A673 (cell line): ENCODE measurements at regions of chr10 and their contacts with region 1.

Region 1: DNA sequence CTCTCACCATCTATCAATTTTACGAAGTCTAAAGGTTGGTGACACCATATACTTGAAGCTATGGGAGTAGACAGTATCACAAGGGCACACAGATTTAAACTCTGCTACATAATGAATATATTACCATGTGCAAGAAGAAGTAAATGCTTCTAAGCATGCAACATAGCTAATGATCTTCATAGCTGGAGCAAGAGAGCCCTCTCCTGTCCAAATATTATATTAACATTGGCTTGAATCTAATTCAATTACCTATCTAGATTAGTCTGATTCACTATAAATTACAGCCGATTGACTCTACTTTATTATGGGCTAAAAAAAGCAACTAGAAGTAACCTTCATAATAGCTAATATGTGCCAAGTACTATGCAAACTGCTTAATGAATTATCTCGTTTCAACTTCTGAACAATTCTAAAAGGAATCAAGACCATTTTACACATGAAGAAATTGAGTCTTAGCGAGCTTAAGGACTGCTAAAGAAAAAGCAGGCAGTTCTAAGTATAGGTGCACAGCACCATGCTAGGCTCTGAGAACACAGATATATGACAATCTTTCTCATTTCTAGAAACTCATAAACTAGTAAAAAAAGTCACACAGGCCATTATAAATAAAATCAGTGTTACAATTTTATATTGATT is 21.9 kb downstream of the FRA10AC1 start:
- DNase-seq: peak; percentile 56
- H3K4me3 ChIP-seq: no peak overlapping the region
- H3K27ac ChIP-seq: no peak overlapping the region
- H3K4me1 ChIP-seq: no peaks in the 10 kb centered on the region
- H3K27me3 ChIP-seq: no peaks in the 10 kb centered on the region
- CTCF ChIP-seq: peak; percentile 53

Region 2: GRCh38 chr10:93376372-93377293 is 303.9 kb before region 1 on chr10:
- CTCF ChIA-PET with region 1: interaction called, 7 read pairs
- POLR2A ChIA-PET with region 1: no interaction called
- intact Hi-C with region 1: loop called (anchors 2 kb)
- DNase-seq: peak; percentile 85
- H3K4me3 ChIP-seq: no peak overlapping the region
- H3K27ac ChIP-seq: no peak overlapping the region
- H3K4me1 ChIP-seq: peaks cover 11% of the 10 kb centered on the region
- H3K27me3 ChIP-seq: no peaks in the 10 kb centered on the region
- CTCF ChIP-seq: peak; percentile 86

Region 3: GRCh38 chr10:93554760-93555432 is 125.6 kb before region 1 on chr10:
- CTCF ChIA-PET with region 1: interaction called, 21 read pairs
- POLR2A ChIA-PET with region 1: no interaction called
- intact Hi-C with region 1: loop called (anchors 2 kb)
- DNase-seq: peak; percentile 76
- H3K4me3 ChIP-seq: no peak overlapping the region
- H3K27ac ChIP-seq: no peak overlapping the region
- H3K4me1 ChIP-seq: no peaks in the 10 kb centered on the region
- H3K27me3 ChIP-seq: no peaks in the 10 kb centered on the region
- CTCF ChIP-seq: peak; percentile 79

Region 4: DNA sequence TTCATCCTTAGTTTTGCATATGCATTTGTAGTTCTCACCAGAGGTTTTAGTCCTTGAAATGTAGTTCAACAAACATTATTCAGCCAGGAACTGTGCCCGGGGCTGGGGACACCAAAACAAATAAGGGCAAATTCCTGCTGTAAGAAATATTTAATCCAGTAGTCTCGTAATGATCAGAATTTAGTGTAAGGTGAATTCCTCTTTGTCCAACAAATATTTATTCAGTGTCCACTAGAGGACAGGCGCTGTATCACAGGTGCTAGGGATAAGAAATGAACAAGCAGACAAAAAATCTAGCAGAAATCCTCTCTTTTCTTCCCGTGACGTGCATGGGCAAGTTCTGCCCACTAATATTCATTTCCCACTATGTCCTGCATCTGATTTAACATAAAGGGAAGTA is 94.8 kb after region 1 on chr10:
- CTCF ChIA-PET with region 1: no interaction called
- POLR2A ChIA-PET with region 1: no interaction called
- intact Hi-C with region 1: no loop called
- DNase-seq: no peak
- H3K4me3 ChIP-seq: no peak overlapping the region
- H3K27ac ChIP-seq: no peak overlapping the region
- H3K4me1 ChIP-seq: no peaks in the 10 kb centered on the region
- H3K27me3 ChIP-seq: no peaks in the 10 kb centered on the region
- CTCF ChIP-seq: no peak